PC-9 (cell line): ENCODE measurements at regions of chr1 and their contacts with region 1.

Region 1: GRCh38 chr1:204323887-204324286 is 35.8 kb downstream of the PLEKHA6 start:
- DNase-seq: peak in 1 of 2 experiments; percentile 61
- H3K4me3 ChIP-seq: no peak overlapping the region
- H3K27ac ChIP-seq: 0 out of 2 replicates have a peak overlapping the region, but pooled peaks have one; percentile 3
- H3K4me1 ChIP-seq: peaks cover 51% of the 10 kb centered on the region
- H3K27me3 ChIP-seq: no peaks in the 10 kb centered on the region
- CTCF ChIP-seq: no peak

Region 2: DNA sequence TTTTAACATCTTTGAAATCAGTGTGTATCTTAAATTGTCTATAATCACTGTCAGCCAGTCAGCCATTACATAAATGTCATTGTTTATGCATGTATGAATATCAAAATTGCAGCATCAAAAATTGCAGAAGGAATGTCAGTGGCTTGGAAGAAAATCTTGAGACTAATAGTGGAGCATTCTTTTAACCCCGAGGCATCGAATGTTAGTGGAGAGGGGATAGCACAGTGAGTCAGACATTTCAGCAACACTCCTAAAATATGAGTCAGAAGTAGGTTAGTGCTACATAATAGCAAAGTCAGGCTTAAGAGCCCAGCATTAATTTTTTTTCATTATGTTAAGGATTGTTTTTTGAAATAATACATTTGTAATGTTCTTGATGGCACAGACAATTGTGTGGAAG is 417.0 kb before region 1 on chr1:
- CTCF ChIA-PET with region 1: no interaction called
- POLR2A ChIA-PET with region 1: interaction called, 11 read pairs
- intact Hi-C with region 1: no loop called
- DNase-seq: peak; percentile 50 to 96
- H3K4me3 ChIP-seq: no peak overlapping the region
- H3K27ac ChIP-seq: peak overlapping the region; percentile 70
- H3K4me1 ChIP-seq: peaks cover 32% of the 10 kb centered on the region
- H3K27me3 ChIP-seq: no peaks in the 10 kb centered on the region
- CTCF ChIP-seq: no peak

Region 3: DNA sequence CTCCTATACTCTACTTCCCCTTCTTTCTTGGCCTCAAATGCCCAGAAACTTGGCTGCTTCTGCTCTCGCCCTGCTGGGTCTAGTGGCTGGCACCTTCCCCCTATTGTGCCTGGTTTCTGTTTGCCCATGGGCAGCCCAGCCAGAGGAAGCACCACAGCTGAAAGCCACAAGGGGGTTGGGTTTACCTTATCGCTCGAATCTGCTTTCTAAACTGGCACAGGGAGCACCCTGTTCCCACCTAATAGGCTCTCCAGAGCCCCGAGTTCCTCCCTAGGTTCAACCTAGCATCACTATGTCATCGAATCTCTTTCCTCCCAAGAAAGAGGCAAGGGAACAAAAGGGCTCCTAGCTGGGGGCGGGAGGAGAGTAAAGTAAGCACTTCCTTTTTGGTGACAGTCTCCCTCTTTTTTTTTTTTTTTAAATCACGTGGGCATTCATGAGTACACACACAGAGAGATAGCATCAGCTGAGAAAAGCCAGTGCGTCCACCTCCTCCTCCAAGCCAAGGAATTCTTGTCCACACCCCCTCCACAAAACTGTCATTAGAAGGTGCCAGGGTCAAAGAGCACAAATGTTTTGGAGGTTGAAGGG is 37.0 kb before region 1 on chr1:
- CTCF ChIA-PET with region 1: no interaction called
- POLR2A ChIA-PET with region 1: interaction called, 4 read pairs
- intact Hi-C with region 1: loop called (anchors 5 kb)
- DNase-seq: peak; percentile 72 to 88
- H3K4me3 ChIP-seq: peak overlapping the region; percentile 56
- H3K27ac ChIP-seq: peak overlapping the region; percentile 80
- H3K4me1 ChIP-seq: peaks cover 57% of the 10 kb centered on the region
- H3K27me3 ChIP-seq: no peaks in the 10 kb centered on the region
- CTCF ChIP-seq: no peak

Region 4: GRCh38 chr1:204335085-204335484 is 11.2 kb after region 1 on chr1:
- CTCF ChIA-PET with region 1: interaction called, 14 read pairs
- POLR2A ChIA-PET with region 1: no interaction called
- intact Hi-C with region 1: no loop called
- DNase-seq: no peak
- H3K4me3 ChIP-seq: no peak overlapping the region
- H3K27ac ChIP-seq: no peak overlapping the region
- H3K4me1 ChIP-seq: peaks cover 20% of the 10 kb centered on the region
- H3K27me3 ChIP-seq: no peaks in the 10 kb centered on the region
- CTCF ChIP-seq: no peak